Left cardiac atrium (tissue), 4 donors: ENCODE measurements at regions of chr5 and their contacts with region 1.

Region 1: GRCh38 chr5:100903039-100903887 is at the start of gene ST8SIA4:
- DNase-seq: peak; percentile 89
- ATAC-seq: peak; percentile 85 to 90
- total RNA-seq, gene ST8SIA4: 4.9 to 8.1 TPM

Region 2: GRCh38 chr5:99305045-99305580 is 1598.2 kb before region 1 on chr5:
- intact Hi-C with region 1: no loop called
- DNase-seq: no peak
- ATAC-seq: no peak

Region 3: GRCh38 chr5:100623719-100624118 is 279.5 kb before region 1 on chr5:
- intact Hi-C with region 1: loop called in 1 of 2 experiments (anchors 10 kb)
- DNase-seq: no peak
- ATAC-seq: peak in 1 of 2 donors; percentile 24